Gastrocnemius medialis (tissue), 4 donors: ENCODE measurements at regions of chr1 and their contacts with region 1.

Region 1: GRCh38 chr1:160098852-160099561 is 588 bp upstream of the IGSF8 start:
- DNase-seq: peak; percentile 97 to 98
- ATAC-seq: peak; percentile 53 to 59
- H3K4me3 ChIP-seq: peak overlapping the region; percentile 49 to 77 (median 66)
- H3K27ac ChIP-seq: peak overlapping the region; percentile 88 to 96 (median 94)
- H3K4me1 ChIP-seq: peaks cover 44 to 47% of the 10 kb centered on the region in 2 donors
- H3K27me3 ChIP-seq: no peaks in the 10 kb centered on the region
- CTCF ChIP-seq: no peak
- POLR2A ChIP-seq: peak; percentile 21 to 42

Region 2: DNA sequence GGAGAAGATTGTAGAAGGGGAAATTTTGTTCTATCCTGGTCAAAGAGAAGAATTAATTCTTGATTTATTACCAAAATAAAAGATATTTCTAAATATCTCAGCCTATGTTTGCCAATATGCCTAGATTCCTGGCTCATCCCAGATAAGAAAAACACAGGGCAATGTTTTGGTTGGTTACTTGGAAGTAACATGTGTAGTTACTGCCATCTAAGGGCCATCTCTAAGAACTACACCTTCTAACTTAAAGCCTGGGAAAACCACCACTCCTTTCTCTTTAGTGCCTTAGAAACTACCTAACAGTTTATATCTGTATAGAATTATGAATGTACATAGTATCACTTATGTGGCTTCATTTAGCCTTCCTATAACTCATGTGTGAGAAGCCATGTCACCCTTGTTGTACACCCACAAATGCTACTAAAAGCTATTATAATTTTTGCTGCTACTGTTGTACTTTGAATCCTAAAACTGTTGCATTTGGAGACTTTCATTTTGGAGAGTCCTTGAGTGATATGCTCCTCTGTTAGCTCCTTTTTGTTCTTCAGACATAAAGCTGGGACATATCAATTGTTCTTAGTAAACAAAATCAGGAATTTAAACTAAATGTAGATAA is 1026.9 kb before region 1 on chr1:
- in situ Hi-C with region 1: no loop called
- intact Hi-C with region 1: no loop called
- DNase-seq: no peak
- ATAC-seq: peak in 1 of 2 donors; percentile 41
- H3K4me3 ChIP-seq: no peak overlapping the region
- H3K27ac ChIP-seq: no peak overlapping the region
- H3K4me1 ChIP-seq: no peaks in the 10 kb centered on the region
- H3K27me3 ChIP-seq: no peaks in the 10 kb centered on the region
- CTCF ChIP-seq: peak; percentile 19 to 59 (median 48)
- POLR2A ChIP-seq: no peak

Region 3: DNA sequence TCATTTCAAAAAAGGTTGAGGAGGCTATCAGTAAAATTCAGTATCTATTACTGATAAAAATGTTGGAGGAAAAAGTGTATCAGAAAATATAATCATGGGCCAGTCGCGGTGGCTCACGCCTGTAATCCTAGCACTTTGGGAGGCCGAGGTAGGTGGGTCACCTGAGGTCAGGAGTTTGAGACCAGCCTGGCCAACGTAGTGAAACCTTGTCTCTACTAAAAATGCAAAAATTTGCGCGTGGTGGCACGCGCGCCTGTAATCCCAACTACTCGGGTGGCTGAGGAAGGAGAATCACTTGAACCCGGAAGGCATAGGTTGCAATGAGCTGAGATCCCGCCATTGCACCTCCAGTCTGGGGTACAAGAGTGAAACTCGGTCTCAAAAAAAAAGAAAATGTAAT is 47.1 kb after region 1 on chr1:
- in situ Hi-C with region 1: no loop called
- intact Hi-C with region 1: loop called (anchors 2 kb)
- DNase-seq: peak in 1 of 2 donors; percentile 45
- ATAC-seq: peak; percentile 5
- H3K4me3 ChIP-seq: no peak overlapping the region
- H3K27ac ChIP-seq: peak overlapping the region; percentile 81 to 100 (median 87)
- H3K4me1 ChIP-seq: peaks cover 0 to 8% of the 10 kb centered on the region in 2 donors
- H3K27me3 ChIP-seq: no peaks in the 10 kb centered on the region
- CTCF ChIP-seq: no peak
- POLR2A ChIP-seq: no peak

Region 4: DNA sequence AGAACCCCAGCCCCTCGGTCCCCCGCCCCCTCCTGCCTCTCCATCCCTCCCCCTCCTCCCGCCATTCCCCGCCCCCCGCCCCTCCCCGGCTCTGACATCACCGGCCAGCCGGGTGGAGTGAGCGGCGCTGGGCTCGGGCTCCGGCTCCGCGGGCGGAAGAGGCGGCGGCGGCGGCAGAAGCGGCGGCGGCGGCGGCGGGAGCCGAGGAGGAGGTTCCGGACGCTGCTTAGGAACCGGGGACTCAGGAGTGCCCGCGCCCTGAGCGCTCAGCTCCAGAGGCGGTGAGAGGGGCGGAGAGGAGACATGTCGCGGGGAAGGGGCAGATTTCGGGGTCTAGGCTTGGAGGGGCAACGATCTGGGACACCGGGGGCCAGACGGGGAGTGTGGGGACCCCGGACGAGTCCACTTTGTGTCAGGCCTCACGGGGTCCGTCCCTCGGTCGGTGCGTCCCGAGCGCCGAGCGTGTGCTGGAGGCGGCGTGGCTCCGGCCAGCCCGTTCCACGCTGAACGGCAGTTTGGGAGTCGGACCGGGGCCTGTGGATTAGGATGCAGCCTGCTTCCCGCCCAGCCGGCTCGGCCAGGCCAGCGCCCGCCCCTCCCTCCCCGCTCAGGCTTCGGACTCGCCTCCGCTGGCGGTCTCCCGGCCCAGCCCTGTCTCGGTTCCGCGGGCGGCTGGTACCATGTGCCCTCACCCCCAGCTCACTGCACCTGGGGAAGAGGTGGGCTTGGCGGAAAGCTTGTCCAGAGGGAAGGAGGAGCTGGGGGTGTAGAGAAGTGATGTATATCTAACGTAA is 106.4 kb after region 1 on chr1 and contains the start of gene PEA15:
- in situ Hi-C with region 1: no loop called
- intact Hi-C with region 1: loop called (anchors 5 kb)
- DNase-seq: peak in 1 of 2 donors; percentile 54
- ATAC-seq: peak; percentile 61 to 66
- H3K4me3 ChIP-seq: peak within 1 kb of the TSS; percentile 73 to 94 (median 86)
- H3K27ac ChIP-seq: peak within 1 kb of the TSS; percentile 84 to 93 (median 90)
- H3K4me1 ChIP-seq: peaks cover 35 to 61% of the 10 kb centered on the region in 2 donors
- H3K27me3 ChIP-seq: no peaks in the 10 kb centered on the region
- CTCF ChIP-seq: no peak
- POLR2A ChIP-seq: peak; percentile 69 to 76
- total RNA-seq, gene PEA15: 10.5 to 34.7 (median 27.2) TPM

Region 5: GRCh38 chr1:160284782-160285344 is 185.9 kb after region 1 on chr1 and contains the start of gene PEX19:
- in situ Hi-C with region 1: loop called in 1 of 4 experiments (anchors 25 kb)
- intact Hi-C with region 1: no loop called
- DNase-seq: peak; percentile 90 to 92
- ATAC-seq: peak; percentile 95 to 96
- H3K4me3 ChIP-seq: peak within 1 kb of the TSS; percentile 65 to 91 (median 82)
- H3K27ac ChIP-seq: peak within 1 kb of the TSS; percentile 79 to 86 (median 84)
- H3K4me1 ChIP-seq: peaks cover 11 to 17% of the 10 kb centered on the region in 2 donors
- H3K27me3 ChIP-seq: no peaks in the 10 kb centered on the region
- CTCF ChIP-seq: no peak
- POLR2A ChIP-seq: peak; percentile 64 to 69
- total RNA-seq, gene PEX19: 61.9 to 151 (median 82.4) TPM

Region 6: GRCh38 chr1:160354388-160354985 is 255.5 kb after region 1 on chr1:
- in situ Hi-C with region 1: loop called in 2 of 4 experiments (anchors 25 kb)
- intact Hi-C with region 1: no loop called
- DNase-seq: no peak
- ATAC-seq: no peak
- H3K4me3 ChIP-seq: no peak overlapping the region
- H3K27ac ChIP-seq: peak overlapping the region in 1 of 4 donors; percentile 41
- H3K4me1 ChIP-seq: peaks cover 20 to 48% of the 10 kb centered on the region in 2 donors
- H3K27me3 ChIP-seq: no peaks in the 10 kb centered on the region
- CTCF ChIP-seq: peak in 3 of 5 experiments; percentile 12 to 37 (median 36)
- POLR2A ChIP-seq: no peak